GM12878 (cell line): ENCODE measurements at regions of chr3 and their contacts with region 1.

Region 1: DNA sequence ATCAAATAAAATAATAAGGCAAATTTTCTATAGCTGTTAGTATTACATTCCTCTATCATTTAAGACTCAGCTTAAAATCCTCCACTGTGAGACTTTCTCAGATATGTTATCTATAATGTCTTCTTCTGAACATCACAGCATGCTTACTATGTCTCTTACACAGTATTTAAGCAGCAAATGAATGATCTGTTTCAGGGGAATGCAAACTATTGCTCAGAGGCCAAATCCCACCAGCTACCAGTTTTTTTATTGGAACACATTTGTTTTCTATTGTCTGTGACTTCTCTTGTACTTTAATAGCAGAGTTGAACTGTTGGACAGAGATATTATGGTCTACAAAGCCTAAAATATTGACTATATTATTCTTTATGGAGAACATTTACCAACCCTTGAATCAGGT is 59.6 kb downstream of the C3orf38 start:
- DNase-seq: no peak
- ATAC-seq: no peak
- H3K4me3 ChIP-seq: no peak overlapping the region
- H3K27ac ChIP-seq: no peak overlapping the region
- H3K4me1 ChIP-seq: no peaks in the 10 kb centered on the region
- H3K27me3 ChIP-seq: no peaks in the 10 kb centered on the region; a peak in 1 of 4 replicates
- CTCF ChIP-seq: no peak
- EP300 ChIP-seq: no peak
- POLR2A ChIP-seq: no peak
- RAD21 ChIP-seq: no peak

Region 2: GRCh38 chr3:88235102-88235501 is 25.7 kb after region 1 on chr3:
- CTCF ChIA-PET with region 1: no interaction called
- POLR2A ChIA-PET with region 1: no interaction called
- RAD21 ChIA-PET with region 1: no interaction called
- SMC1A ChIA-PET with region 1: no interaction called
- in situ Hi-C with region 1: no loop called
- intact Hi-C with region 1: no loop called
- DNase-seq: no peak
- ATAC-seq: no peak
- H3K4me3 ChIP-seq: no peak overlapping the region
- H3K27ac ChIP-seq: no peak overlapping the region
- H3K4me1 ChIP-seq: no peaks in the 10 kb centered on the region
- H3K27me3 ChIP-seq: no peaks in the 10 kb centered on the region; a peak in 1 of 4 replicates
- CTCF ChIP-seq: no peak
- EP300 ChIP-seq: no peak
- POLR2A ChIP-seq: no peak
- RAD21 ChIP-seq: no peak

Region 3: GRCh38 chr3:89107461-89108290 is 898.3 kb after region 1 on chr3 and contains the start of gene EPHA3:
- CTCF ChIA-PET with region 1: interaction called, 3 read pairs
- POLR2A ChIA-PET with region 1: no interaction called
- RAD21 ChIA-PET with region 1: no interaction called
- SMC1A ChIA-PET with region 1: no interaction called
- in situ Hi-C with region 1: loop called (anchors 5 kb)
- intact Hi-C with region 1: loop called (anchors 5 kb)
- DNase-seq: no peak
- ATAC-seq: peak; percentile 96
- H3K4me3 ChIP-seq: no peak within 1 kb of the TSS; the same call in 1 of the 2 replicates
- H3K27ac ChIP-seq: no peak within 1 kb of the TSS
- H3K4me1 ChIP-seq: no peaks in the 10 kb centered on the region; the same call in 1 of the 2 replicates
- H3K27me3 ChIP-seq: peaks cover 0 to 2% of the 10 kb centered on the region in 2 experiments; a peak in 1 of 4 replicates
- CTCF ChIP-seq: no peak
- EP300 ChIP-seq: no peak
- POLR2A ChIP-seq: no peak
- RAD21 ChIP-seq: no peak
- polyA plus RNA-seq, gene EPHA3: not detected